T-cell (primary cell): ENCODE measurements at regions of chr4 and their contacts with region 1.

Region 1: GRCh38 chr4:94976371-94977011 is 218.7 kb downstream of the BMPR1B start:
- DNase-seq: no peak
- ATAC-seq: no peak
- H3K4me3 ChIP-seq: no peak overlapping the region
- H3K4me3 Mint-ChIP-seq: no peak overlapping the region
- H3K27ac ChIP-seq: no peak overlapping the region
- H3K27ac Mint-ChIP-seq: no peak overlapping the region
- H3K4me1 ChIP-seq: no peaks in the 10 kb centered on the region
- H3K4me1 Mint-ChIP-seq: no peaks in the 10 kb centered on the region
- H3K27me3 ChIP-seq: peaks cover 0 to 5% of the 10 kb centered on the region in 2 experiments
- H3K27me3 Mint-ChIP-seq: peaks cover 0 to 3% of the 10 kb centered on the region in 2 donors

Region 2: GRCh38 chr4:94802091-94802490 is 174.4 kb before region 1 on chr4:
- CTCF ChIA-PET with region 1: no interaction called
- POLR2A ChIA-PET with region 1: no interaction called
- DNase-seq: no peak
- ATAC-seq: no peak
- H3K4me3 ChIP-seq: no peak overlapping the region
- H3K4me3 Mint-ChIP-seq: no peak overlapping the region
- H3K27ac ChIP-seq: no peak overlapping the region
- H3K27ac Mint-ChIP-seq: no peak overlapping the region
- H3K4me1 ChIP-seq: no peaks in the 10 kb centered on the region
- H3K4me1 Mint-ChIP-seq: no peaks in the 10 kb centered on the region
- H3K27me3 ChIP-seq: no peaks in the 10 kb centered on the region
- H3K27me3 Mint-ChIP-seq: no peaks in the 10 kb centered on the region

Region 3: GRCh38 chr4:94852332-94853015 is 124.0 kb before region 1 on chr4:
- CTCF ChIA-PET with region 1: no interaction called
- POLR2A ChIA-PET with region 1: no interaction called
- DNase-seq: no peak
- ATAC-seq: no peak
- H3K4me3 ChIP-seq: no peak overlapping the region
- H3K4me3 Mint-ChIP-seq: no peak overlapping the region
- H3K27ac ChIP-seq: no peak overlapping the region
- H3K27ac Mint-ChIP-seq: no peak overlapping the region
- H3K4me1 ChIP-seq: no peaks in the 10 kb centered on the region
- H3K4me1 Mint-ChIP-seq: no peaks in the 10 kb centered on the region
- H3K27me3 ChIP-seq: no peaks in the 10 kb centered on the region
- H3K27me3 Mint-ChIP-seq: peaks cover 0 to 2% of the 10 kb centered on the region in 2 donors

Region 4: DNA sequence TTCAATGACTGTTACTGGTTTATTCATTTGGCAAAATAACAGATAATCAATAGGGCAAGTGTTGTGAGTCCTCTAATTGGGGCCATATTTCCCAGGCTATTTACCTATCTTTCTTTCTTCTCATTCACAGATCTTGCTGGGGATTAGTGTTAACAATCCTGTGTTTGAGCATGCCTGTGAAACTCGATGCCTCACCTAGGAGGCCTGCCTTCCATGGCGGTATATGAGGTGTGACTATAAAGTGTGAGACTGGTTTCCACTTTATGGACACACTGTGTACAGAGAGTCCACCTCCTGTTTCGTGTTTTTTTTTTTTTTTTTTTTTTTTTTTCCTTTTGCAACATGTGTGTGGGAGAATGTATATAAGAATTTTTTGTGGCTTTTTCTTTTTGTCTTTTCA is 19.5 kb before region 1 on chr4:
- CTCF ChIA-PET with region 1: no interaction called
- POLR2A ChIA-PET with region 1: interaction called in 1 of 2 experiments, 13 read pairs
- DNase-seq: no peak
- ATAC-seq: no peak
- H3K4me3 ChIP-seq: no peak overlapping the region
- H3K4me3 Mint-ChIP-seq: no peak overlapping the region
- H3K27ac ChIP-seq: no peak overlapping the region
- H3K27ac Mint-ChIP-seq: no peak overlapping the region
- H3K4me1 ChIP-seq: no peaks in the 10 kb centered on the region
- H3K4me1 Mint-ChIP-seq: no peaks in the 10 kb centered on the region
- H3K27me3 ChIP-seq: no peaks in the 10 kb centered on the region
- H3K27me3 Mint-ChIP-seq: peaks cover 0 to 4% of the 10 kb centered on the region in 2 donors